ENCODE measurements at regions of chr12 and their contacts with region 1.

Region 1: GRCh38 chr12:7907009-7907408 is 29.0 kb downstream of the SLC2A3 start:
- DNase-seq: peak in 4 of 14 experiments; percentile 6 to 52 (median 24)
- ATAC-seq: no peak
- H3K4me3 ChIP-seq: no peak overlapping the region
- H3K4me3 Mint-ChIP-seq: no peak overlapping the region
- H3K27ac ChIP-seq: no peak overlapping the region
- H3K27ac Mint-ChIP-seq: no peak overlapping the region
- H3K4me1 ChIP-seq: no peaks in the 10 kb centered on the region
- H3K4me1 Mint-ChIP-seq: no peaks in the 10 kb centered on the region
- H3K27me3 ChIP-seq: no peaks in the 10 kb centered on the region
- H3K27me3 Mint-ChIP-seq: no peaks in the 10 kb centered on the region
- CTCF ChIP-seq: no peak

Region 2: DNA sequence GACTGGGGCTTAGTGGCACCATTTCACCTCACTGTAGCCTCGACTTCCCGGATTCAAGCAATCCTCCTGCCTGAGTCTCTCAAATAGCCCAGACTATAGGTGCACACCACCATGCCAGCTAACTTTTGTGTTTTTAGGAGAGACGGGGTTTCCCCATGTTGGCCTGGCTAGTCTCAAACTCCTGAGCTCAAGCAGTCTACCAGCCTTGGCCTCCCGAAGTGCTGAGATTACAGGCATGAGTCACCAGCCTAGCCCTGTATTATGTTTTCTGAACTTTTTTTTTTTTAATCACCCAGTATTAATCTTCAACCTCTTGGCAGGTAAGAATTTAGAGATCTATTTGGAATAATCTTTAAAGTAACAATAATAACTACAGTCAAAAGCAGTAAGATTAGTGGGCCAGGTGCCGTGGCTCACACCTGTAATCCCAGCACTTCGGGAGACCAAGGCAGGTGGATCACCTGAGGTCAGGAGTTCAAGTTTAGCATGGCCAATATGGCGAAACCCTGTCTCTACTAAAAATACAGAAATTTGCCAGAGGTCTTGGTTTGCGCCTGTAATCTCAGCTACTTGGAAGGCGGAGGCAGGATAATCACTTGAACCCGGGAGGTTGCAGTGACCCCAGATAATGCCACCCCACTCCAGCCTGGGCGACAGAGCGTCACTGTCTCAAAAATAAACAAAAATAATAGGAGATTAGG is 109.2 kb before region 1 on chr12:
- CTCF ChIA-PET with region 1: no interaction called
- POLR2A ChIA-PET with region 1: interaction called, 3 read pairs
- intact Hi-C with region 1: loop called in 1 of 2 experiments (anchors 2 kb)
- DNase-seq: no peak
- ATAC-seq: no peak
- H3K4me3 ChIP-seq: no peak overlapping the region
- H3K4me3 Mint-ChIP-seq: no peak overlapping the region
- H3K27ac ChIP-seq: no peak overlapping the region
- H3K27ac Mint-ChIP-seq: no peak overlapping the region
- H3K4me1 ChIP-seq: no peaks in the 10 kb centered on the region
- H3K4me1 Mint-ChIP-seq: no peaks in the 10 kb centered on the region
- H3K27me3 ChIP-seq: no peaks in the 10 kb centered on the region
- H3K27me3 Mint-ChIP-seq: no peaks in the 10 kb centered on the region
- CTCF ChIP-seq: no peak

Region 3: GRCh38 chr12:7877420-7877819 is 29.6 kb before region 1 on chr12:
- CTCF ChIA-PET with region 1: no interaction called
- POLR2A ChIA-PET with region 1: no interaction called
- intact Hi-C with region 1: loop called in 1 of 2 experiments (anchors 5 kb)
- DNase-seq: no peak
- ATAC-seq: no peak
- H3K4me3 ChIP-seq: no peak overlapping the region
- H3K4me3 Mint-ChIP-seq: no peak overlapping the region
- H3K27ac ChIP-seq: no peak overlapping the region
- H3K27ac Mint-ChIP-seq: no peak overlapping the region
- H3K4me1 ChIP-seq: peaks cover 6% of the 10 kb centered on the region
- H3K4me1 Mint-ChIP-seq: no peaks in the 10 kb centered on the region
- H3K27me3 ChIP-seq: peaks cover 10 to 15% of the 10 kb centered on the region in 2 experiments
- H3K27me3 Mint-ChIP-seq: peaks cover 15% of the 10 kb centered on the region
- CTCF ChIP-seq: no peak

Region 4: GRCh38 chr12:8609061-8609570 is 702.1 kb after region 1 on chr12:
- CTCF ChIA-PET with region 1: no interaction called
- POLR2A ChIA-PET with region 1: no interaction called
- intact Hi-C with region 1: loop called in 1 of 2 experiments (anchors 5 kb)
- DNase-seq: peak in 3 of 14 experiments; percentile 18 to 44 (median 37)
- ATAC-seq: peak; percentile 32
- H3K4me3 ChIP-seq: no peak overlapping the region
- H3K4me3 Mint-ChIP-seq: peak overlapping the region; percentile 58
- H3K27ac ChIP-seq: no peak overlapping the region
- H3K27ac Mint-ChIP-seq: no peak overlapping the region
- H3K4me1 ChIP-seq: peaks cover 5% of the 10 kb centered on the region
- H3K4me1 Mint-ChIP-seq: peaks cover 12% of the 10 kb centered on the region
- H3K27me3 ChIP-seq: no peaks in the 10 kb centered on the region
- H3K27me3 Mint-ChIP-seq: peaks cover 7% of the 10 kb centered on the region
- CTCF ChIP-seq: peak; percentile 62

Measured in CD4-positive, alpha-beta T cell (primary cell).